Activated T-helper 2 cell treated with anti-CD3 and anti-CD28 coated beads, Interferon-gamma antibody, Interleukin-2, Interleukin-4, amounts not matched to agents 10 μg/mL and 5 μg/mL and 100 μg/mL, durations not matched to agents 14 hours and 24 hours and 36 hours (primary cell): ENCODE measurements at regions of chr2 and their contacts with region 1.

Region 1: GRCh38 chr2:68441179-68441993 is 25.7 kb downstream of the FBXO48 start:
- DNase-seq: peak; percentile 78
- H3K4me3 Mint-ChIP-seq: peak overlapping the region; percentile 28
- H3K27ac Mint-ChIP-seq: peak overlapping the region; percentile 65
- H3K4me1 Mint-ChIP-seq: peaks cover 16% of the 10 kb centered on the region
- H3K27me3 Mint-ChIP-seq: peaks cover 15% of the 10 kb centered on the region

Region 2: DNA sequence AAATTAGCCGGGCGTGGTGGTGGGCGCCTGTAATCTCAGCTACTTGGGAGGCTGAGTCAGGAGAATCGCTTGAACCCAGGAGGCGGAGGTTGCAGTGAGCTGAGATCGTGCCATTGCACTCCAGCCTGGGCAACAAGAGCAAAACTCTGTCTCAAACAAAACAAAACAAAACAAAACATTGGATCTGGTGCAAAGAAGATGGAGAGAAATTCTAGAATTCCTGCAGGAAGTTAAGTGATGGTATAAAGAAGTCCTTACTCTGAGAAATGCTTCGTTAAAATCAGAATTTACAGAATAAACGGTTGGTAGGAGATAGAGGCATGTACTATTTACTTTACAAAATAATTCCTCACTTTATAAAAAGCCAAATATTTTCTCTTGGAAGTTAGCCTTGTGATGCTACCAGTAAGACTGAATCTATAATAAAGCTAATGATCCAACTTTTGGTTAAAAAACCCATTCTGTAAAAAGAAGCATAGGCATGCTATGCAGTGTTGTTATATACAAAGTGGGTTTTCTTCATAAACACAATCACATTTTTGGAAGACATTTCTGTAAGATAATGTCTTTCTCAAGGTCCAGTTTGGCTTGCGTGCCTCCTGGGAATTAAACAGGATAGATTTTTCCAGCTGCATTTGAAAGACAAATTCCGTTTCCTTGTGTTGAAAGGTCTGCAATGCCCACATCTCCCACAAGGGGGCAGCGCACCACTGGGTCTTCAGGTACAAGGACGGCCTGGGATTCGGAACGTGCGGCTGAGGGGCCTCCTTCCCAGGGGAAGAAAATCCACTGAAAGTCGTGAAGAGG is 319.3 kb before region 1 on chr2:
- intact Hi-C with region 1: loop called (anchors 1 kb)
- DNase-seq: peak; percentile 50
- H3K4me3 Mint-ChIP-seq: no peak overlapping the region
- H3K27ac Mint-ChIP-seq: no peak overlapping the region
- H3K4me1 Mint-ChIP-seq: peaks cover 14% of the 10 kb centered on the region
- H3K27me3 Mint-ChIP-seq: peaks cover 1% of the 10 kb centered on the region

Region 3: DNA sequence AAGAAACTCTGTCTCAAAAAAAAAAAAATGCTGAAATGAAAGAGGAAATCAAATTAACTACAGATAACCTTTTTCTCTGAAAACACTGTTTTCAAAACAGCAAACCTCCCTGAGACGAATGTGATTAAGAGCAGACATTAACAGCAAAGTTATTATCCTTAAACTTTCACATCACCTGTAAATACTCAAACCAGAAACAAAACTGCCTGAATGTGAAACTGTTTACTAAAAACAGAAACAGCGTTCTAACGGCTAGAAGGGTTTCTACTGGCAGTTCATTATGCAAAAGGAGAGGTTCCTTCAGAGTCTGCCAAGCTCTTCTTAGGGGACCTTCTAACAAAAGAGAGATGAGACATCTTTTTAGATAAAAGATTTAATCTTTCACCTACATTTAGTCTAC is 237.8 kb before region 1 on chr2:
- intact Hi-C with region 1: loop called (anchors 5 kb)
- DNase-seq: no peak
- H3K4me3 Mint-ChIP-seq: peak overlapping the region; percentile 64
- H3K27ac Mint-ChIP-seq: peak overlapping the region; percentile 90
- H3K4me1 Mint-ChIP-seq: peaks cover 53% of the 10 kb centered on the region
- H3K27me3 Mint-ChIP-seq: no peaks in the 10 kb centered on the region

Region 4: DNA sequence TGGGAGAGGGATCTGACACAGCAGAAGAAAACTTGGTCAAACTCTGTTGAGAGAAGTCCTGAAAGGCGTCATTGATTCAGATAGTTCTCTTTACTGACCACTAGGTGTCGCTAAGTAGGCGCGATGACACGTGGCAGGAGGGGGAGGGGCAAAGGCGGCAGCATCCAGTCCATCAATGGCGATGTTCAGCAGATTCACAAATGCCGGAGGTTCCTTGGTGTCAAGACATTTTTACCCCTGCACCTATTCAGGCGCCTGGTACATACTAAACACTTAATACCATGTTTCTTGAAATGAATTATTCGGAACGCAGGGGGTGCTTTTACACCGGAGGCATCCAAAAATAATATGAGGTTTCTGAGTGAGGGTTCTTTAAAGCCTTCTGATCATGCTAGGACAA is 79.3 kb before region 1 on chr2:
- intact Hi-C with region 1: loop called (anchors 1 kb)
- DNase-seq: peak; percentile 66
- H3K4me3 Mint-ChIP-seq: no peak overlapping the region
- H3K27ac Mint-ChIP-seq: no peak overlapping the region
- H3K4me1 Mint-ChIP-seq: peaks cover 11% of the 10 kb centered on the region
- H3K27me3 Mint-ChIP-seq: peaks cover 16% of the 10 kb centered on the region

Region 5: GRCh38 chr2:68423966-68424650 is 17.3 kb before region 1 on chr2:
- intact Hi-C with region 1: loop called (anchors 1 kb)
- DNase-seq: no peak
- H3K4me3 Mint-ChIP-seq: no peak overlapping the region
- H3K27ac Mint-ChIP-seq: no peak overlapping the region
- H3K4me1 Mint-ChIP-seq: peaks cover 2% of the 10 kb centered on the region
- H3K27me3 Mint-ChIP-seq: peaks cover 4% of the 10 kb centered on the region